HCT116 (cell line): ENCODE measurements at regions of chr13 and their contacts with region 1.

Region 1: GRCh38 chr13:74533226-74533625 is 399.0 kb upstream of the KLF12 start:
- DNase-seq: no peak
- ATAC-seq: no peak
- H3K4me3 ChIP-seq: no peak overlapping the region
- H3K27ac ChIP-seq: no peak overlapping the region
- H3K4me1 ChIP-seq: no peaks in the 10 kb centered on the region
- H3K27me3 ChIP-seq: no peaks in the 10 kb centered on the region
- CTCF ChIP-seq: no peak
- POLR2A ChIP-seq: no peak
- RAD21 ChIP-seq: no peak

Region 2: DNA sequence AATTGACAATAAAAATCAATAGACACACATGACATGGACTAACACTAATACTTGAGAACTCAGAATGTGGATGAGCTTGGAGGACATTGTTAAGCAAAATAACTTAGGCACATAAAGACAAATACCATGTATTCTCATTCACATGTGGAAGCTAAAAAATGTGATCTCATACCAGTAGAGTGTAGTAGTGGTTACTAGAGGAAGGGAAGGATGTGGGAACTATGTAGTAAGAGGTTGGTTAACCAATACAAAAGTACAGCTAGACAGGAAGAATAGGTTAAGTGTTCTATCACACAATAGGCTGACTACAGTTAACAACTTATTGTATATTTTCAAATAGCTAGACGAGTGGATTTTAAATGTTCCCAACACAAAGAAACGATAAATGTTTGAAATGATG is 16.8 kb after region 1 on chr13:
- CTCF ChIA-PET with region 1: no interaction called
- POLR2A ChIA-PET with region 1: no interaction called
- RAD21 ChIA-PET with region 1: no interaction called
- intact Hi-C with region 1: loop called (anchors 1 kb)
- DNase-seq: no peak
- ATAC-seq: no peak
- H3K4me3 ChIP-seq: no peak overlapping the region
- H3K27ac ChIP-seq: no peak overlapping the region
- H3K4me1 ChIP-seq: no peaks in the 10 kb centered on the region
- H3K27me3 ChIP-seq: no peaks in the 10 kb centered on the region
- CTCF ChIP-seq: no peak
- POLR2A ChIP-seq: no peak
- RAD21 ChIP-seq: no peak